Dendritic cell treated with granulocyte-macrophage colony-stimulating factor and Interleukin-4, amounts not matched to agents 40 ng/mL and 50 ng/mL, for 4 days (primary cell): ENCODE measurements at regions of chr22 and their contacts with region 1.

Region 1: GRCh38 chr22:25362215-25362882 is 142.9 kb downstream of the CRYBB2 start:
- H3K4me3 Mint-ChIP-seq: no peak overlapping the region
- H3K27ac Mint-ChIP-seq: peak overlapping the region; percentile 56
- H3K4me1 Mint-ChIP-seq: peaks cover 44% of the 10 kb centered on the region
- H3K27me3 Mint-ChIP-seq: no peaks in the 10 kb centered on the region

Region 2: DNA sequence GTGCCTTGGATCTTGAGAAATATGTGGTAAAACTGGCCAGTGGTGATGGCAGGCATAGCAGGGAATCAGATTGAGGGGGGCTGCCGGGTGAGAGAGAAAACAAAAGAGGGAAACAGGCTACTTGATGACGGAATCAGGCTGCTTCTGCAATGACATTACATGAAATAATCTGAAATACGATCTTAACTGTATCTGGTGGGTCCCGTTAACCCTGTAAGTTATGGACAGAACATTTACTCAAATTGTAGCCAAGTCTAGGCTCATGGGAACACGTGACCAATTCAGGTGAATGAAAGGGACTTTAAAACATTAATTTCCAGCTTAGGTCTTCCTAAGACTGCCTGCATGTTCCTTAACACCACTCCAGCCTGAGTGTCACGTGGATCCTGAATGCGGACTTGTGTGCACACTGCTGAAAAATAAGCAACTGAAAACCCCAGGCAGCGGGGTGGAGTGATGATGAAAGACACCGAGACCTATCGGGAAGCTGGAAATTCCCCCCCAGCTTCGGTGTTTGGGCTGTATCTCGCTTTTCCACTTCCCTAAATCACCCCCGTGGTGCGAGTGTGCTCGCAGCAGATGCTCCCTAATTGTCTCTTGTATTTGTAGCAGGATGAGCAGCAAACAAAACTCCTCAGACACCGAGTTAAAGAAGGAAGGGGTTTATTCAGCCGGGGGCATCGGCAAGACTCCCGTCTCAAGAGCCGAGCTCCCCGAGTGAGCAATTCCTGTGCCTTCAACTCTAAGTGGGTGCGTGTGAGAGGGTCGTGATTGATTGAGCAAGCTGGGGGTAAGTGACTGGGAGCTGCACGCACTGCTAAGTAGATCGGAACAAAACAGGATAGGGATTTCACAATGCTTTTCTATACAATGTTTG is 57.1 kb after region 1 on chr22:
- intact Hi-C with region 1: loop called (anchors 10 kb)
- H3K4me3 Mint-ChIP-seq: peak overlapping the region; percentile 79
- H3K27ac Mint-ChIP-seq: peak overlapping the region; percentile 85
- H3K4me1 Mint-ChIP-seq: peaks cover 34% of the 10 kb centered on the region
- H3K27me3 Mint-ChIP-seq: peaks cover 16% of the 10 kb centered on the region

Region 3: DNA sequence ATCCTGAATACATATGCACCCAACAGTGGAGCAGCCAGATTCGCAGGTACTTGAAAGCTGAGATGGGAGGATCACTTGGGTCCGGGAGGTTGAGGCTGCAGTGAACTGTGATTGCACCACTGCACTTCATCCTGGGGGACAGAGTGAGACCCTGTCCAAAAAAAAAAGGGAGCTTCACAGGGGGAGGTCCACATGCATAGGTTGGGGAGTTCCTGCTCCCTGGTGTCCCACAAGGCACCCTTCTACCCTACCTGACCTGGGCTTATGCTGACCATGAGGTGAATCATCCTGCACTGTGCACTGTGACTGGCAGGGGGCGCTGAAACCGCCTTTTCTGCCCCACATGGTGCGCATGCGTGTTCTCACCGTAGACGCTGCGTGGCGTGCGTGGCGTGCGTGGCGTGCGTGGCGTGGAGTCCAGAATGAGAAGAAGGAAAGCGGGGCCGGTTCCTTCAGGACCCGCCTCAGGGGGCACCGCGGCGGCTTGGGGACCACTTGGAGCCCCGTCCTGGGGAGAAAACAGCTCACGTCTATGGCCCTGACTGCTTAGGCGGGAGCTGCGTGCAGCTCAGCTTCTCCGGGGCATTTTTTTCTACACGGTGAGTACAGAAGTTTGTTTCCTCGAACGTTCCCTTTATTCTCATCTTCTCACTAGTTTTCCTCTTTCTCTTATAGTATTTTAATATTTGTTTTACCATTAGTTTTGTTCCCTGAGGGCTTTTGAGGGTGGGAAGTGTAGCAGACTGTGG is 85.5 kb after region 1 on chr22:
- intact Hi-C with region 1: loop called (anchors 5 kb)
- H3K4me3 Mint-ChIP-seq: peak overlapping the region; percentile 91
- H3K27ac Mint-ChIP-seq: peak overlapping the region; percentile 83
- H3K4me1 Mint-ChIP-seq: peaks cover 37% of the 10 kb centered on the region
- H3K27me3 Mint-ChIP-seq: no peaks in the 10 kb centered on the region